ENCODE measurements at regions of chr6 and their contacts with region 1.

Region 1: DNA sequence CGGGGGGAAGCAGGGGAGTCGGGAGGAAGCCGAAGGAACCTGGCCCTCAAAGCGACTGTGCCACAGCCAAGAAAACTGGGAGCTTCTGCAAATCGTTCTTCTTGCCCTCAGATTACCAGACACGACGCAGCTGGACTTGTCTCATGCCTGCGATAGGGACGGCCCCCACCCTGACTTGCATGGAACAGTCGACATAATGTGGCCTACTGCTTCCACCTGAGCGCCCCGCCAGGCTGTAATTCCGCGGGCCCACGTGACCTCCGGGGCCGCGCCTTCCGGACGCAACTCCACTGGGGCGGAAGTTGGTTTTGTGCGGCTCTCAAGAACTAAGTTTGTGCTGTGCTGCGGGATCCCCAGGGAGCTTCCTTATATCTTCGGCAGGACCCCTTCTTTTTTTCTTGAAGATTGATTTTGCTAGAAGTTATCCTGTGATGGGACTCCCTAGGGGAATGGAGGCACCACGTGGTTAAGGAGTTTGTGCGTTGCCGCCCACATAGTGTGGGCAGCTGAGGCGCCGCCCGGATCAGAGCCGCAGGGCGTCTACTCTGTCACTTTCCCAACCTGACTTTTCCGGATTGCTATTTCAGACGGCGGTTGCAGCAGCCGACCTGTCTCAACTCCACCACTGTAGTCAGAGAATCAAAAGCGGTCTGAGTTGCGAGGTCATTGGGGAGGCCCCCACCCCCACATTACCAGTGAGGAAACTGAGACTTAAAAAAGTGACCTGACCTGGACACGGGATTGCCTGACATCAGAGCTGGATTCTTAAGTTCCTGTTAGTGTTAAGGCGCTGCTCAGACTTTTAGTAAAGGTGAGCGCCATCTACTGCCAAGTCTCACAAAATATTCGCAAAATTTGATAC is 540 bp upstream of the CD164 start:
- DNase-seq: peak; percentile 92
- H3K4me3 Mint-ChIP-seq: peak overlapping the region; percentile 98
- H3K27ac Mint-ChIP-seq: peak overlapping the region; percentile 99
- H3K4me1 Mint-ChIP-seq: peaks cover 39% of the 10 kb centered on the region
- H3K27me3 Mint-ChIP-seq: peaks cover 3% of the 10 kb centered on the region

Region 2: GRCh38 chr6:107820338-107821261 is 1562.2 kb before region 1 on chr6:
- intact Hi-C with region 1: loop called (anchors 5 kb)
- DNase-seq: peak; percentile 26
- H3K4me3 Mint-ChIP-seq: peak overlapping the region; percentile 84
- H3K27ac Mint-ChIP-seq: peak overlapping the region; percentile 86
- H3K4me1 Mint-ChIP-seq: peaks cover 75% of the 10 kb centered on the region
- H3K27me3 Mint-ChIP-seq: no peaks in the 10 kb centered on the region

Region 3: DNA sequence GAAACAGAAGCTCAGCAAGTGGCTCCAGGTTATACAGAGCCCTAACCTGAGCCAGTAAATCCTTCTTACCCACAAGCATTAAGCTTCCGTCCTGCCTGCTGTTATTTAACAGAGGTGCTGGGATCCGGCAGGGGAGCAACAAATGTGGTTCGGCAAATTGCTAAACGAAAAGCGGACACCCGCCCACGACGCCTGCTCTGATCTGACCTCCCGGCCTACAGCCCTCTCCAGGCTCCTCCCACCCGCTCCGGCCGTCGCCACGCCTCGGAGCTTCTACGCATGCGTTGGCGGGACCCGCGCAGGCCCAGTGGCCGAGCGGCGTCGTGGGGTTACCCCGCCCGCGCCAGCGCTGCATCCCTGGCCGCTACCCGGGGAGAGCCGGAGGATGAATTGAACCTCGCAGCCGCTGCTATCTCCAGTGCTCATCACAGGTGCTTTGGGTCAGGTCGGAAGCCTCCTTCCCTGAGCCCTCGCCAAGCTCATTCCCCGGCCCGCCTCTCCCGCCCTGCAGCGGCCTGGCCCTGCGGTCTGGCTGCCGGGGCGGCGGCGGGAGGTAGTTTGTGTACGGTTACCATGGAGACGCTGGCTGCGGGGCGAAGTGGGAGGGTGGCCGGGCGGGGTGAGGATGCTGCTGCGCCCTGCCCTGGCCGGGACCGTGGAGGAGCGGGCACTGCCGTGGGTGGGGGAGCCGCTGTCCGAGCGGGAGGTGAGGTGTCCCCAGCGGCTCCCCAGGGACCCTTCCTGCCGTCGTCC is 534.5 kb before region 1 on chr6 and contains the start of gene ARMC2:
- intact Hi-C with region 1: loop called (anchors 5 kb)
- DNase-seq: peak; percentile 85
- H3K4me3 Mint-ChIP-seq: peak within 1 kb of the TSS; percentile 81
- H3K27ac Mint-ChIP-seq: peak within 1 kb of the TSS; percentile 42
- H3K4me1 Mint-ChIP-seq: peaks cover 22% of the 10 kb centered on the region
- H3K27me3 Mint-ChIP-seq: peaks cover 28% of the 10 kb centered on the region
- total RNA-seq, gene ARMC2: 1.9 and 2.7 TPM in 2 replicates

Region 4: DNA sequence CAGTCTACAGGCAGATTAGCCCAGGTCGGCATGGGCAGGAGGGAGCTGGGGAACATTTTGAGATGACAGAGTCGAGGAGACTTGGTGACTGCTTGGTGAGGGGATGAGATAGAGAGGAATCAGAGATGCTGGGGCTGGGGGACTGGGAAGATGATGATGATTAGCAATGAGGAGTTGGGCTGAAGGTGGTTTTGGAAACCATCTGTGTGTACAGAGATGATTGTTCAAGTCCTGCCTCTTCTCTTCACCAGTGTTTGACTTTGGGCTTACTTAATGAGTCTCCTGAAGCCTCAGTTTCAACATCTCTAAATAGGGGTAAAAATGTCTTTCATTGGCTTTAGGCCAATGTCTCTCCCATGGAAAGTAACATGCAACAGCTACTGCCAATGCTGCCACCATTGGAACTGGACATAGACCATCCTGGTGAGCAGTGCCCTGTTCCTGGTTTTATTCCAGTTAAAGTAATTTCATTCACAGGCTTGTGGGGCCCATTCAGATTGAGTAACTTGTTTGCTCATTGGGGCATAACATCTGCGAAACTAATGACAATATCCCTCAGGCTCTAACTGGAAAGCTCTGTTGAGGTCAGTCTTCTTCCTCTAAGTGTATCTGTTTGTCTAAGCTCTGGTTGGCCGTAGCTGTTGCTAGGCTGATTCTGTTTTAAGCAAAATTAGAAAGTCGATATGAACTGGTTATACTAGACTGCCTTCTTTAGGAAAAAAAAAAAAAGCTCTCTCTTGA is 435.5 kb before region 1 on chr6:
- intact Hi-C with region 1: no loop called
- DNase-seq: no peak
- H3K4me3 Mint-ChIP-seq: no peak overlapping the region
- H3K27ac Mint-ChIP-seq: peak overlapping the region; percentile 73
- H3K4me1 Mint-ChIP-seq: peaks cover 50% of the 10 kb centered on the region
- H3K27me3 Mint-ChIP-seq: no peaks in the 10 kb centered on the region

Region 5: DNA sequence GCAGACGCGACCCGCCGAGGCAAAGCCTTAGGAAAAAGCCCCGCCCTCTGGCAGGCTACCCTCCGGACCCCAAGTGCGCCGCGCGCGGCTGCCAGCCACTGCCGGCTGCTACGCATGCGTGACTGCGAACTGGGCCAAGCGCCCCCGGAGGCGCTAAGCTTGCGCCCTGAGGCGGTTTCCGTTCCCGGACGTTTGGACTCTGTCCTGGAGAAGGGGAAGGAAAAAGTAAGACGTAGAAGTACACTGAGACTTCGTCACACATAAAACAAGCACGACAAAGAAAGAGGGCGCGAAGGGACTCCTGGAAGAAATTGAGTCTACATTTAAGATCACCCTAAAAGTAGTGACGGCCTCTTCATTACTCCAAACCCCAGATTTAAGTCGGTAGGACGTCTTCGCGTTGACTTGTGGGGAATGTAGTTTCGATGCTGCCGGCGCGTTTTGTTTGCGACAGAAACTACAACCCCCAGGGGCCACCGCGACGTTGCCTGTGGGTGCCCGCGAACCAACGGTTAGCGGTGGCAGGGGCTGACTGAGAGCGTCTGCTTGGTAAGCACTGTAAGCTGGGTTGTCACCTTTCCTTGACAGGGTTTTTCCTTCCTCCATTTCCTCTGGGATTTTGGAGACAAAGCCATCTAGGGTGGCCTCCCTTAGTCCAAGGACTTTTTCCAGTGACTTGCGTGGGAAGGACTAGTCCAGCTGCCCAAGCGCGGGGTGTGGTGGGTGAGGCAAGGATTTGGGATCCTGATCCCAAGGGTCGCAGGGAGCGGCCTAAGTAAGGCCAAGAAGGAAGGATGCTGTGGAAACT is 287.6 kb before region 1 on chr6 and contains the start of gene CEP57L1:
- intact Hi-C with region 1: loop called (anchors 1 kb)
- DNase-seq: peak; percentile 92
- H3K4me3 Mint-ChIP-seq: peak within 1 kb of the TSS; percentile 93
- H3K27ac Mint-ChIP-seq: peak within 1 kb of the TSS; percentile 99
- H3K4me1 Mint-ChIP-seq: peaks cover 45% of the 10 kb centered on the region
- H3K27me3 Mint-ChIP-seq: no peaks in the 10 kb centered on the region
- total RNA-seq, gene CEP57L1: 18.2 and 25.4 TPM in 2 replicates

Region 6: DNA sequence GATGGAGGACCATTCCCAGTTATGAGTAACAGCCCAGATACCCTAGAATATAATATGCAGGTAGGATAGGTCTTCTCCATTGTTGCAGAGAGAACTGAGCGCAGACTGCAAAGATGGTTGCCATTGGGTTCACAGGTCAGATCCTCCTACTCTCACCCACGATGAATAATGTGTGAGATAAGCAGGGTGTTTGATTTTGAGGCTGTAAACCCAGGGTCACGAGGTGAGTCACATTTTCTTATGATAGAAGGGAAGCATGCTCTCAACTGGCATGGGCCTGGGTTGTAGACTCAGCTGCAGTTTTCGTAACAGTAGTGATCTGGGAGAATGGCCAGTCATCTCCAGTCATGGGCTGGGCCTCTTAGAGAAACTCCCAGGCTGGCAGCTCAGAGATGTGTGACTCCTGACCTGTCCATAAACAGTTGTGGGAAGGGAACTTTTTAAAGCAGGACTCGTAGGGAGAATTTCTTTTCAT is 74.8 kb before region 1 on chr6:
- intact Hi-C with region 1: loop called (anchors 2 kb)
- DNase-seq: no peak
- H3K4me3 Mint-ChIP-seq: no peak overlapping the region
- H3K27ac Mint-ChIP-seq: peak overlapping the region; percentile 76
- H3K4me1 Mint-ChIP-seq: peaks cover 35% of the 10 kb centered on the region
- H3K27me3 Mint-ChIP-seq: no peaks in the 10 kb centered on the region

Region 7: GRCh38 chr6:109477725-109478124 is 94.9 kb after region 1 on chr6:
- intact Hi-C with region 1: loop called (anchors 2 kb)
- DNase-seq: no peak
- H3K4me3 Mint-ChIP-seq: peak overlapping the region; percentile 78
- H3K27ac Mint-ChIP-seq: peak overlapping the region; percentile 90
- H3K4me1 Mint-ChIP-seq: peaks cover 68% of the 10 kb centered on the region
- H3K27me3 Mint-ChIP-seq: no peaks in the 10 kb centered on the region

Region 8: DNA sequence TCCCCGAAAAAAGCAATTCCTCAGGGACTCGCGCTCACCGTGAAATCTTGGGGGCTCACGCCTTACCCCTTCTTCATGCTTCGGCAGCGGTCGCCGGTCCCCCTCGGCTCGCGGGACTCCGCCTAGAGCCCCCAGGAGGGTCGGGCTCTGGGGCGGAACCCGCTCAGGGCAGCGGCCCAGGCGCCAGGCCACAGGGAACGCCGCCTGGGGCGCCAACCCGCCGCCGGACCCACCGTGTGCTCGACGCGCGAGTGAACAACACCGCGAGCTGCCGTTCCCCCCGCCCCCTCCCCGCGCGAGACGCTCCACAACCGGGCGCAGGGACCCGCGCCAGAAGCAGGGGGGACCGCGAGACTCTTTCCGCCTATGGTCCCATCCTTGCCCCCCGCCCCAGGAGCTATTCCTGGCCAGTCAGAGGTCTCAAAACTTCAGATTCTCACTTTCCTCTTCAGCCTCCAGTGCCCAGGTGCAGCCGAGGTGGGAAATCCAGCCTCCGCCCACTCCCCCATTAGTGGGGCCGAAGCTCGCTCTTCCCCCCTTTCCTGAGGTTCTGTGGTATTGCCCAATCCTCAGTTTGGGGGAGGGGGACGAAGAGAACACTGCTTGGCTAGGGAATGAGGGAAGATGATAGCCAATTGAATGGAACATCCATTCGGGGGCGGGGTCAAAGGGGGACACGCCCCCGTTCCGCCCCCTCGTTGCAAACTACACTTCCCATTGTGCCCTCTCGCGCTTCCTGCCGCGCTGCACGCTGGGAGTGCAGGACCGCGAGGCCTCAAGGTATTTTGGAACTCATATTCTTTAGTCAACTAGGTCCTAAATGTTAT is 796.8 kb after region 1 on chr6 and contains the start of gene WASF1:
- intact Hi-C with region 1: loop called (anchors 10 kb)
- DNase-seq: peak; percentile 85
- H3K4me3 Mint-ChIP-seq: peak within 1 kb of the TSS; percentile 78
- H3K27ac Mint-ChIP-seq: peak within 1 kb of the TSS; percentile 3
- H3K4me1 Mint-ChIP-seq: peaks cover 8% of the 10 kb centered on the region
- H3K27me3 Mint-ChIP-seq: peaks cover 19% of the 10 kb centered on the region
- total RNA-seq, gene WASF1: 2.3 TPM in 2 replicates